ENCODE measurements at regions of chr1 and their contacts with region 1.

Region 1: GRCh38 chr1:41416552-41417334 is 55.5 kb downstream of the FOXO6 start:
- DNase-seq: peak; percentile 66
- ATAC-seq: peak; percentile 76
- H3K4me3 ChIP-seq: no peak overlapping the region
- H3K27ac ChIP-seq: no peak overlapping the region
- H3K4me1 ChIP-seq: peaks cover 2% of the 10 kb centered on the region; the same call in 1 of the 2 replicates
- H3K27me3 ChIP-seq: peaks cover 19% of the 10 kb centered on the region
- CTCF ChIP-seq: peak; percentile 90
- POLR2A ChIP-seq: no peak
- RAD21 ChIP-seq: peak; percentile 91

Region 2: DNA sequence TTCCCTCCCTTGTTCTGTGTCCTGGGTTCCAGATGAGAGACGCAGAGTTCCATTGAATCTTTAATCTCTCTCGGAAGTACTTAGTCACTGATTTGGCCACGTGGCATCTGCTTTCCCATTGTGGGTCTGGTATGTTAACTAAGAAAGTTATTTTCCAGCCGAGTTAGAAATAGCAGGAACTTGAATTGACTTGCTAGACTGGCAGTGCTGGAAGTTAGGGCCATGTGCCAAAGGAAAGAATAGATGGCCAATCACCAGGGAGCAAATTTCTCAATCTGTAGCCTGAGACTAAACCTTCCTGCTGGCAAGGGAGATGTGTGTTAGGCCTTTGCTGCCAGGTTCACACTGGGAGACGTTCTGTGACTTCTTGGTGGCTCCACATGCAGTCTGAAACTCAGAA is 371.0 kb before region 1 on chr1:
- CTCF ChIA-PET with region 1: no interaction called
- POLR2A ChIA-PET with region 1: no interaction called
- dilution Hi-C with region 1: no loop called
- in situ Hi-C with region 1: loop called (anchors 25 kb)
- intact Hi-C with region 1: no loop called
- DNase-seq: peak; percentile 38
- ATAC-seq: peak; percentile 24; the same call in 1 of the 2 replicates
- H3K4me3 ChIP-seq: no peak overlapping the region
- H3K27ac ChIP-seq: no peak overlapping the region
- H3K4me1 ChIP-seq: peaks cover 2% of the 10 kb centered on the region; the same call in 1 of the 2 replicates
- H3K27me3 ChIP-seq: no peaks in the 10 kb centered on the region
- CTCF ChIP-seq: no peak
- POLR2A ChIP-seq: no peak
- RAD21 ChIP-seq: no peak

Region 3: DNA sequence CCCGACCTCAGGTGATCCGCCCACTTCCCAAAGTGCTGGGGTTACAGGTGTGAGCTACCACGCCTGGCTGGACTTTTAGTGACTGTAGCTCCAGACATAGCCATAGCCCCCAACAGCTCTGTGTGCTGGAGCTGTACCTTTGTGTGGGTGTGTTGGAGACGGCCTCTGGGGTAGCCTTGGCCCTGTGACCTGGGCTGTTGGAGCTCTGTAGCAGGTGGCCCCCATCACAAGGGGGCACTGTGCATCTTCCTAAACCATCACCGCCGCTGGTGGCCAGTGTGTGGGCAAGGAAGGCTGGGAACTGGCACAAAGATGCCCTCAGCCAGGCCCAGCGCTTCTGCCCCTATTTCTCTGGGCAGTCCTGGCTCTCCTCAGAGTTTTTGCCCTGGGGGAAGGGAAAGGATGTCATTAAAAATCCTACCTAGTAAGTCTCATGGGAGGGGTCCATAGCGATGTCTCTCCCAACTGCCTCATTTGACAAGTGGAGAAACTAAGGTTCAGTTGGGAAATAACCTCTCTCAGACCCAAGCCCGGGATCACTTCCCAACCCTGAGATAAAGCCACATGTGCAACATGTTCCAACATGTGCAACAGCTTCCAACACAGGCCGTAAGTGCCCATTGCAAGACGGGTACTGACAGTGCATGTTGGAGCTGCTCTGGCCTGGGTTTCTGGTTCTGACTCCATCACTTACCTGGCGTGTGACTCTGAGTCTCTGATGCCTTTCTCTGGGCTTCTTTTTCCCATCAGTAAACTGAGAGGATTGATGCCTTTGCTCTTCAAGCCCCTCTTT is 93.7 kb before region 1 on chr1:
- CTCF ChIA-PET with region 1: interaction called, 3 read pairs
- POLR2A ChIA-PET with region 1: no interaction called
- dilution Hi-C with region 1: no loop called
- in situ Hi-C with region 1: no loop called
- intact Hi-C with region 1: loop called (anchors 1 kb)
- DNase-seq: no peak
- ATAC-seq: peak; percentile 84
- H3K4me3 ChIP-seq: no peak overlapping the region
- H3K27ac ChIP-seq: no peak overlapping the region
- H3K4me1 ChIP-seq: no peaks in the 10 kb centered on the region
- H3K27me3 ChIP-seq: peaks cover 34% of the 10 kb centered on the region
- CTCF ChIP-seq: peak; percentile 41
- POLR2A ChIP-seq: no peak
- RAD21 ChIP-seq: peak; percentile 53

Region 4: GRCh38 chr1:41516168-41517061 is 99.7 kb after region 1 on chr1:
- CTCF ChIA-PET with region 1: no interaction called
- POLR2A ChIA-PET with region 1: no interaction called
- dilution Hi-C with region 1: no loop called
- in situ Hi-C with region 1: no loop called
- intact Hi-C with region 1: no loop called
- DNase-seq: peak; percentile 83
- ATAC-seq: peak; percentile 99
- H3K4me3 ChIP-seq: no peak overlapping the region
- H3K27ac ChIP-seq: no peak overlapping the region
- H3K4me1 ChIP-seq: peaks cover 3% of the 10 kb centered on the region; the same call in 1 of the 2 replicates
- H3K27me3 ChIP-seq: no peaks in the 10 kb centered on the region
- CTCF ChIP-seq: peak; percentile 92
- POLR2A ChIP-seq: no peak
- RAD21 ChIP-seq: peak; percentile 79

Region 5: DNA sequence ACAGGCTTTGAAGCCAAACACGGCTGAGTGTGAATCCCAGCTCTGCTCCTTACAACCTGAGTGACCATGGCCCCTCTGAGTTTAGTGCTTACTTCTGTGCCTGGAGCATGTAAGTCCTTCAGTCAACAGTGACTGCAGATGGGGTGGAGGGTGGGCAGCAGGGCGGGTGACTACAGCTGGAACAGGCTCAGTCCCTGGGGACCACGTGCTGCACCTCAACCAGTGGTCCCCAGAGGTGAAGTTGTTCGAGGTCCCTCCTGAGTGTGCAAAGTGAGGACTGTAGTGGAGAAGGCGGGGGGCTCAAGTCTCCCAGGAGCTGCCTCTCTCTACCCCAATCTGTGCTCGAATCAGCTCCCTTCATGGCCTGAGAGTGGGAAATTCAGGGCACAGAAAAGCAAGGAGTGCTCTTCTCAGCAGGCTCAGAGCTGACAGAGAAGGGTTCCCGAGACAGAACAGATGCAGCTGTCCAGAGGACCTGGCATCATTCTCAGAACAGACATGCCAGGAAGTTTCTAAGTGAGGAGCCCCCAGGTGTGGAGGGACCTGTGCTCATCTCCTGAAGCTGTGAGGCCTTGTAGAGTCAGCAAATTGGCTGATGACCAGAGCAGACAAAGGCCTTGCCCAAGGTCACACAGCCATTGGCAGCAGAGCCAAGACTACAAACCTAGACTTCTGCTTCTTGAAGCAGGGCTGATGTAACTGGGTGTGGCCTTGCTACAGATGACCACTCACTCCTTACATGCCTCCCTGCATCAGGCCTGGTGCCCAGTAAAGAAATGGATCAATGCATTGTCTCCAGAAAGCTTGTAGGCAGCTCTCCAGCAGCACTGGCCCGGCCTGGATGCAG is 129.5 kb after region 1 on chr1:
- CTCF ChIA-PET with region 1: no interaction called
- POLR2A ChIA-PET with region 1: no interaction called
- dilution Hi-C with region 1: no loop called
- in situ Hi-C with region 1: no loop called
- intact Hi-C with region 1: no loop called
- DNase-seq: no peak
- ATAC-seq: no peak
- H3K4me3 ChIP-seq: no peak overlapping the region
- H3K27ac ChIP-seq: no peak overlapping the region
- H3K4me1 ChIP-seq: no peaks in the 10 kb centered on the region
- H3K27me3 ChIP-seq: no peaks in the 10 kb centered on the region
- CTCF ChIP-seq: no peak
- POLR2A ChIP-seq: no peak
- RAD21 ChIP-seq: no peak